ENCODE measurements at regions of chr10 and their contacts with region 1.

Region 1: GRCh38 chr10:20990604-20991003 is 93.5 kb upstream of the NEBL start:
- DNase-seq: peak; percentile 82
- ATAC-seq: peak; percentile 59
- H3K4me3 ChIP-seq: no peak overlapping the region
- H3K27ac ChIP-seq: peak overlapping the region; percentile 91
- H3K4me1 ChIP-seq: peaks cover 44% of the 10 kb centered on the region
- H3K27me3 ChIP-seq: no peaks in the 10 kb centered on the region
- CTCF ChIP-seq: no peak

Region 2: DNA sequence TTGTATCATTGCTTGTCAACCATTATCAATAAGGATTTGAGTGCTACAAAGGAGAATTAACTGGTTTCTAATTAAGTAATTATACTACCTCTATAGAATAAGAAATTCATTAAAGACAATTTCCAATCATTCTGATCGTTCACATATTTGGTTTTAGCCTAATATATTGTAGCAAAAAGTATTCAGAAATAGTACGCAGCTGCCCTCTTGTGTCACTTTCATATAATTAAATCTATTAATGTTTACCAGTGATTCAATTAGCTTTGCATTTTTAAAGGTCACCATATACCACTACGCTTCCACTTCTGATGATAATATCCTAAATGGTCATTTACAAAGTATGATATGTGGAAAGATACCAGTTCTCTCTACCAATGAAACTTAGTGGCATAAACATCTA is 221.8 kb before region 1 on chr10:
- CTCF ChIA-PET with region 1: no interaction called
- POLR2A ChIA-PET with region 1: no interaction called
- intact Hi-C with region 1: no loop called
- DNase-seq: peak; percentile 19
- ATAC-seq: no peak
- H3K4me3 ChIP-seq: no peak overlapping the region
- H3K27ac ChIP-seq: no peak overlapping the region
- H3K4me1 ChIP-seq: peaks cover 12% of the 10 kb centered on the region
- H3K27me3 ChIP-seq: peaks cover 3% of the 10 kb centered on the region; the same call in 1 of the 2 replicates
- CTCF ChIP-seq: peak; percentile 47; the same call in 1 of the 2 replicates

Region 3: GRCh38 chr10:20936396-20936795 is 54.2 kb before region 1 on chr10:
- CTCF ChIA-PET with region 1: no interaction called
- POLR2A ChIA-PET with region 1: no interaction called
- intact Hi-C with region 1: loop called (anchors 1 kb)
- DNase-seq: no peak
- ATAC-seq: peak; percentile 49
- H3K4me3 ChIP-seq: no peak overlapping the region
- H3K27ac ChIP-seq: peak overlapping the region; percentile 81
- H3K4me1 ChIP-seq: peaks cover 19% of the 10 kb centered on the region
- H3K27me3 ChIP-seq: no peaks in the 10 kb centered on the region
- CTCF ChIP-seq: no peak

Region 4: GRCh38 chr10:21002097-21002878 is 11.7 kb after region 1 on chr10:
- CTCF ChIA-PET with region 1: no interaction called
- POLR2A ChIA-PET with region 1: no interaction called
- intact Hi-C with region 1: loop called (anchors 1 kb)
- DNase-seq: peak; percentile 86
- ATAC-seq: peak; percentile 93
- H3K4me3 ChIP-seq: peak overlapping the region; percentile 46
- H3K27ac ChIP-seq: peak overlapping the region; percentile 99
- H3K4me1 ChIP-seq: peaks cover 21% of the 10 kb centered on the region
- H3K27me3 ChIP-seq: no peaks in the 10 kb centered on the region
- CTCF ChIP-seq: no peak

Region 5: GRCh38 chr10:21039721-21040120 is 49.1 kb after region 1 on chr10:
- CTCF ChIA-PET with region 1: no interaction called
- POLR2A ChIA-PET with region 1: no interaction called
- intact Hi-C with region 1: no loop called
- DNase-seq: no peak
- ATAC-seq: no peak
- H3K4me3 ChIP-seq: no peak overlapping the region
- H3K27ac ChIP-seq: no peak overlapping the region
- H3K4me1 ChIP-seq: no peaks in the 10 kb centered on the region
- H3K27me3 ChIP-seq: no peaks in the 10 kb centered on the region
- CTCF ChIP-seq: no peak

Region 6: DNA sequence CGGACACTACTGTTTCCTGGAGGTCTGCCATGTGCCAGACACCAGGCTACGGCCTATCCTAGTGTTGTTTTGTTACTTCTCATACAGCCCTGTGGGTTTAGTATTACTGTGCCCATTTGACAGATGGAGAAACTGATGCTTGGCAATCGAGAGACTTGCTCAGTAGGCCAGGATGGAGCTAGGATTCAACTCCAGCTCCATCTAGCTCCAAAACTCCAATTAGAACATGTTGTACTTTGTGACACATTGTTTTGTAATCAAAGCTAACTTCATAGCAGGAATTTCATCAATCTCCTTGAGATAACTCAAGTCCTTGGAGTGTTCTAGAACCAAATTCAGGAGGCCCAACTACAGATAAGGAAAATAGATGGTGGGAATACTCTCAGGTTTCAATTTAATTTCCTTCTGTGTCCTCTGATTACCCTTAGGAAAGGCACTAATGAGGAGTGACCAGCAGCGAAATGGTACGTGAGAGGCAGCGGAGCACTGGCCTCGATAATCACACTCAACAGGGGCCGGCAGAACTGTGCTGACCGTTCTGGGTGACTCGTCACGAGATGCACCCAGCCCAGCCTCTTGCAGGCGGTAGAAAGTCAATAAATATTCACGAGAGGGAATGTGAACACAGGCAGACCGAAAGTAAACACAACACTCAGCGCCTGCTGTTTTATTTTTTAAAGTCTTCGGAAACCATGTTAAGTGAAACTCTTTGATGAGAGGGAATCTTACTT is 176.1 kb after region 1 on chr10:
- CTCF ChIA-PET with region 1: no interaction called
- POLR2A ChIA-PET with region 1: no interaction called
- intact Hi-C with region 1: loop called (anchors 10 kb)
- DNase-seq: peak; percentile 12
- ATAC-seq: peak; percentile 69
- H3K4me3 ChIP-seq: peak overlapping the region; percentile 43
- H3K27ac ChIP-seq: no peak overlapping the region
- H3K4me1 ChIP-seq: peaks cover 15% of the 10 kb centered on the region
- H3K27me3 ChIP-seq: no peaks in the 10 kb centered on the region
- CTCF ChIP-seq: no peak